ENCODE measurements at regions of chr5 and their contacts with region 1.

Region 1: GRCh38 chr5:40386289-40386688 is 293.4 kb upstream of the PTGER4 start:
- DNase-seq: no peak
- H3K4me3 Mint-ChIP-seq: no peak overlapping the region
- H3K27ac Mint-ChIP-seq: peak overlapping the region; percentile 42
- H3K4me1 Mint-ChIP-seq: peaks cover 88% of the 10 kb centered on the region
- H3K27me3 Mint-ChIP-seq: no peaks in the 10 kb centered on the region

Region 2: DNA sequence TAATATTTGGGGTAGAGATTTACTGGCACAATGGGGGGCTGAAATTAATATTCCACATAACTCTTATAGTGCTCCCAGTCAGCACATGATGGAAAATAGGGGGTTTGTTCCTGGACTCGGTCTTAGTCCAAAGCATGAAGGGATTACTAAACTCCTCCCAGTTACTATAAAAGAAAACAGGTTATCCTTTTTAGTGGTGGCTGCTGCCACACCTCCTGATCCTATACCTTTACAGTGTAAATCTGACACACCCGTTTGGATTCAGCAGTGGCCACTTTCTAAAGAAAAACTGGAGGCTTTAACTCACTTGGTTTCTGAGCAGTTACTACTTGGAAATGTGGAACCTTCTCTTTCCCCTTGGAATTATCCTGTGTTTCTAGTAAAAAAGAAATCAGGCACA is 279.4 kb before region 1 on chr5:
- intact Hi-C with region 1: no loop called
- DNase-seq: no peak
- H3K4me3 Mint-ChIP-seq: no peak overlapping the region
- H3K27ac Mint-ChIP-seq: no peak overlapping the region
- H3K4me1 Mint-ChIP-seq: peaks cover 3% of the 10 kb centered on the region
- H3K27me3 Mint-ChIP-seq: no peaks in the 10 kb centered on the region

Region 3: GRCh38 chr5:40223884-40224402 is 162.3 kb before region 1 on chr5:
- intact Hi-C with region 1: loop called (anchors 1 kb)
- DNase-seq: peak; percentile 43
- H3K4me3 Mint-ChIP-seq: peak overlapping the region; percentile 54
- H3K27ac Mint-ChIP-seq: peak overlapping the region; percentile 94
- H3K4me1 Mint-ChIP-seq: peaks cover 51% of the 10 kb centered on the region
- H3K27me3 Mint-ChIP-seq: no peaks in the 10 kb centered on the region

Region 4: DNA sequence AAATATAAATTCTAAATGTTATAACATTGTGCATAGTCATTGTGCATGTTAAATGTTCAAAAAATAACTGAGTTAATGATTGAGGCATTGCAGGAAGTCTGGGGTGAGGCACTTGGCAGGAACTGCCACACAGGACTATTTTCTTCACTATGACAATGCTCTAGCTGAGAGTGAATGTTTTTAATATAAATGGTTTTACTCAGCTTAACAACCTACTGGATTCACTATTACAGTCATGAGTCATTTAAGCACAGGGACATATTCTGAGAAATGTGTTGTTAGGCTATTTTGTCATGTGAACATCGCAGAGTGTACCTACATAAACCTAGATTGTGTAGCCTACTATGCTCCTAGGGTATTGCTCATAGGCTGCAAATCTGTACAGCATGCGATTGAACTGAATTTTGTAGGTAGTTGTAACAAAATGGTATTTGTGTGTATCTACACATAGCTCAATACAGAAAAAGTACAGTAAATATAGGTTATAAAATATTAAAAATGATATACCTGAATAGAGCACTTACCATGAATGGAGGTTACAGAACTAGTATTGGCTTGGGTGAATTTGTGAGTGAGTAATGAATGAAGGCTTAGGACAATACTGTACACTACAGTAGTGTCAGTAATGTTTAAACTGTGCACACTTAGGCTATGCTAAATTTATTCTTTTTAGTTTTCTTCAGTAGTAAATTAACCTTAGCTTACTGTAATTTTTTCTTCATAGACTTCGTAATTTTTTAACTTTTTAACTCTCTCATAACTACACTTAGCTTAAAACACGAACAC is 52.6 kb before region 1 on chr5:
- intact Hi-C with region 1: loop called (anchors 1 kb)
- DNase-seq: no peak
- H3K4me3 Mint-ChIP-seq: no peak overlapping the region
- H3K27ac Mint-ChIP-seq: peak overlapping the region; percentile 43
- H3K4me1 Mint-ChIP-seq: peaks cover 43% of the 10 kb centered on the region
- H3K27me3 Mint-ChIP-seq: no peaks in the 10 kb centered on the region

Region 5: DNA sequence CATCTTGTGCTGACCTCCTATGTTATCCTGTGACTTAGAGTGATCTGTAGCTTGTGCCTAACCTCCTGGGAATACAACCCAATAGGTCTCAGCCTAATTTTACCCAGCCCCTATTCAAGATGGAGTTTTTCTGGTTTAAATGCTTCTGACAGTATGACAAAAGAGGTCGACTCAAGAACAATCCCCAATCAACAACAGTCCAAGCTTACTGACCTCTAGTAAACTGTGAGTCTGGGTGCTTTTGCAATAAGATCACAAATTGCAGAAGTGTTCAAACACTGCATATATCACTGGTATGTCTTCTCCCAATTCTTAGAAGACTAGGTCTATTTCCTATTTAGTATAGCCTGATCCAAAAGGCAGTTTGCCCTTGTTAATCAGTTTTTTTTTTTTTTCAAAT is 30.0 kb before region 1 on chr5:
- intact Hi-C with region 1: no loop called
- DNase-seq: no peak
- H3K4me3 Mint-ChIP-seq: no peak overlapping the region
- H3K27ac Mint-ChIP-seq: no peak overlapping the region
- H3K4me1 Mint-ChIP-seq: peaks cover 17% of the 10 kb centered on the region
- H3K27me3 Mint-ChIP-seq: no peaks in the 10 kb centered on the region

Region 6: GRCh38 chr5:40428126-40428525 is 41.8 kb after region 1 on chr5:
- intact Hi-C with region 1: loop called (anchors 1 kb)
- DNase-seq: no peak
- H3K4me3 Mint-ChIP-seq: no peak overlapping the region
- H3K27ac Mint-ChIP-seq: peak overlapping the region; percentile 76
- H3K4me1 Mint-ChIP-seq: peaks cover 49% of the 10 kb centered on the region
- H3K27me3 Mint-ChIP-seq: no peaks in the 10 kb centered on the region

Region 7: DNA sequence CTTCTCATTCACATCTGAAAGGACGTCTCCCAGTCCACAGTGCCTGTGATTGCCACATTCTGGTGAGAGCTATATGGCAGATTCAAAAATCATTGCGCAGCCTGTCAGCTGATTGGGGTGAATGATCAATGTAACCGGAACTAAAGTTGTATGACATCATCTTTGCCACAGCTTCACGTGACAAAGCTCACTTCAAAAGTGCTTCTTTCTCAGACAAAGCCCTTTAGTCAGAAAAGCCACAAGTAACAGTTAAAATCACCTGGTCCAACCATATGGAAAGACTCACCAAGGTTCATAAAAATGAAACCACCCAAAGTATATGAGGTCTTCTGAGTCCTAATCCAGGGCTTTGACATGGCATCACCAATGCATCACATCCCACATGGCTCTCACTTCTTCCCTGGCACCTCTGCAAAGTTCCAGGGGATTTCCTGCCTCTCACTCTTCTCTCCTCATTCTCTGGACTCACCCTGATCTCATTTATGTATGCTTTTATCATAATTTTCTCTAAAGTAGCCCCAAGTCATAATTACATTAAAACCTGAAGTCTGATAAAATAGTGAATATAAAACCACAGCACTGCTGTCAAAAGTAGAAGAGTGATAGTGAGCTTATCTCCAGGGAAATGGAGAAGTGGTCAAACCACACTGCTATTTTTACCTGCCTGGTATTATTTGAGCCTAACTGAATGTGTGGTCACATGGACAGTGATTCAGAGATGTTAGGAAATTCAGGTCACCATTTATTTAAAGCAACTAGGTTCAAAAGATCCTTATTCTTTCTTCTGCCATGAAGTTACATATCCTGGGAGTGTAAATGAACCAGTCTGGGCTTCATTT is 100.4 kb after region 1 on chr5:
- intact Hi-C with region 1: loop called (anchors 1 kb)
- DNase-seq: peak; percentile 64
- H3K4me3 Mint-ChIP-seq: peak overlapping the region; percentile 19
- H3K27ac Mint-ChIP-seq: peak overlapping the region; percentile 75
- H3K4me1 Mint-ChIP-seq: peaks cover 78% of the 10 kb centered on the region
- H3K27me3 Mint-ChIP-seq: no peaks in the 10 kb centered on the region

Region 8: GRCh38 chr5:40688127-40688761 is 302.0 kb after region 1 on chr5:
- intact Hi-C with region 1: loop called (anchors 1 kb)
- DNase-seq: peak; percentile 76
- H3K4me3 Mint-ChIP-seq: peak overlapping the region; percentile 76
- H3K27ac Mint-ChIP-seq: peak overlapping the region; percentile 73
- H3K4me1 Mint-ChIP-seq: peaks cover 70% of the 10 kb centered on the region
- H3K27me3 Mint-ChIP-seq: no peaks in the 10 kb centered on the region

Region 9: DNA sequence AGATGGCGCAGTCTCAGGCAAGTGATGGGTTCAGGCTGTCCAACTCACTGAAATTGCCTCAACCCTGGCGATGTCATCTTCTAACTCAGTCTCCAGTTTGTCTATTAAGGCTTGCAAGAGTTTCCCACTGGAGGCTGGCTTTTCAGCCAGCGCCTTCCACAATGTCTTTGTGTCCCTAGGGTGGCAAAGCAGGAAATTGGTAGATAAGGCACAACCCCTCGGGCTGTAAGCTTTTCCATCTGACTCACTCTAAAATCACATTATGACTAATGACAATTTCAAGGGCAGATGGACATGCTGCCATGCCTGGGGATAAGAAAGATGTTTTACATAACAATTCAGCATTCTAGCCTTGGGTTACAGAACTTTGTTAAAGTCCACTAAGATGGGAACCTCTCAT is 622.9 kb after region 1 on chr5:
- intact Hi-C with region 1: no loop called
- DNase-seq: no peak
- H3K4me3 Mint-ChIP-seq: no peak overlapping the region
- H3K27ac Mint-ChIP-seq: no peak overlapping the region
- H3K4me1 Mint-ChIP-seq: no peaks in the 10 kb centered on the region
- H3K27me3 Mint-ChIP-seq: no peaks in the 10 kb centered on the region

Region 10: DNA sequence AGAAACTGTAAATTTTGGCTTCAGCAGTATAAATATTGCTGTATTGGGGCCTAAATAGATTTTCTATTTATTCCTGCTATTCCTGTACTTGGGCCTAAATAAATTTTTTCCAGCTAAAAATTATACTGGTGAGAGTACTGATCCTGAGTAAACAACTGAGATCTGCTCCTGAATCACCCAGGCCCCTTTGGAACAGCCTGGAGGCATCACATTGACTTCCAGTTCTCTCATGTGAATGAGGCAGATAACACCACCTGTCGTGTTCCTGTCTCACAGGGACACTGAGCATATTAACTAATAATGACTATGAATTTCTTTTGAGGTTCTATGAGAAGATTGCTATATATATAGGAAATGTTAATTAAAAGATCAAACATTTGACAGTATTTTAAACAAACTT is 1243.6 kb after region 1 on chr5:
- intact Hi-C with region 1: no loop called
- DNase-seq: no peak
- H3K4me3 Mint-ChIP-seq: no peak overlapping the region
- H3K27ac Mint-ChIP-seq: no peak overlapping the region
- H3K4me1 Mint-ChIP-seq: no peaks in the 10 kb centered on the region
- H3K27me3 Mint-ChIP-seq: no peaks in the 10 kb centered on the region